ENCODE measurements at regions of chr1 and their contacts with region 1.

Region 1: DNA sequence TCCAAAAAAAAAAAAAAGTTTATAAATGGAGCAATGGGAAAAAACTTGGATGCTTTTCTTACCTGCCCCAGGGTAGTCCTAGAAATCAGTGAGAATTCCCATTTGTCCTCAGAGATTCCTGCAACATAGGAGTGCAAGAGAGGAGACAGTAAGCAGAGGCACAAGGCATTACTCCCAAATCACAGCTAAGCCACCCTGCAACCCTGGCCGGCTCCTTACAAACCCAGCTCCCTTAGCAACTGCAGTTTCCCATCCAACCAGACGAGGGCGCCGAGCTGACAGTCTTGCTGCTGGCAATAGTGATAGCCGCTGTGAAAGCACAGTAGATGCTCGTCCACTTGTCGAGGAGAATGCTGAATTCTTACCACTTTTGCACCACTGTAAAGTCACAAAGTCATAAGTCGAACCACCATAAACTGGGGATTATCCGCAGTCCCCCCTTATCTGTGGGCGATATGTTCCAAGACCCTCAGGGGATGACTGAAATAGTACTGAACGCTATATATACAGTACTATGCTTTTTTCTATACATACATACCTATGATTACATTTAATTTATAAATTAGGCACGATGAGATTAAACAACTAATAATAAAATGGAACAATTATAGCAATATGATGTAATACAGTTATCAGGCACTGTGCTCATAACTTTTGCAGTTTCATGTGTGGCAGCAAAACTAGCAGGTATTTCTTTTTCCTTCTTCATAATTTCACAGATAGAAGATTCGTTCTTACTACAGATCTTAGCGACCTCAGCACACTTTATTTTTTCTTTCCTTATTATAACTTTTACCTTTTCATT is 6.0 kb upstream of the PITHD1 start:
- DNase-seq: peak; percentile 60 to 81
- H3K4me3 ChIP-seq: no peak overlapping the region
- H3K27ac ChIP-seq: no peak overlapping the region
- H3K4me1 ChIP-seq: peaks cover 11% of the 10 kb centered on the region; the same call in 1 of the 2 replicates
- H3K27me3 ChIP-seq: no peaks in the 10 kb centered on the region
- CTCF ChIP-seq: peak; percentile 82

Region 2: GRCh38 chr1:23627069-23627735 is 145.0 kb before region 1 on chr1:
- CTCF ChIA-PET with region 1: no interaction called
- POLR2A ChIA-PET with region 1: no interaction called
- intact Hi-C with region 1: no loop called
- DNase-seq: peak; percentile 26 to 48
- H3K4me3 ChIP-seq: peak overlapping the region; percentile 20; the same call in 1 of the 2 replicates
- H3K27ac ChIP-seq: no peak overlapping the region
- H3K4me1 ChIP-seq: no peaks in the 10 kb centered on the region; the same call in 1 of the 2 replicates
- H3K27me3 ChIP-seq: no peaks in the 10 kb centered on the region
- CTCF ChIP-seq: no peak

Region 3: DNA sequence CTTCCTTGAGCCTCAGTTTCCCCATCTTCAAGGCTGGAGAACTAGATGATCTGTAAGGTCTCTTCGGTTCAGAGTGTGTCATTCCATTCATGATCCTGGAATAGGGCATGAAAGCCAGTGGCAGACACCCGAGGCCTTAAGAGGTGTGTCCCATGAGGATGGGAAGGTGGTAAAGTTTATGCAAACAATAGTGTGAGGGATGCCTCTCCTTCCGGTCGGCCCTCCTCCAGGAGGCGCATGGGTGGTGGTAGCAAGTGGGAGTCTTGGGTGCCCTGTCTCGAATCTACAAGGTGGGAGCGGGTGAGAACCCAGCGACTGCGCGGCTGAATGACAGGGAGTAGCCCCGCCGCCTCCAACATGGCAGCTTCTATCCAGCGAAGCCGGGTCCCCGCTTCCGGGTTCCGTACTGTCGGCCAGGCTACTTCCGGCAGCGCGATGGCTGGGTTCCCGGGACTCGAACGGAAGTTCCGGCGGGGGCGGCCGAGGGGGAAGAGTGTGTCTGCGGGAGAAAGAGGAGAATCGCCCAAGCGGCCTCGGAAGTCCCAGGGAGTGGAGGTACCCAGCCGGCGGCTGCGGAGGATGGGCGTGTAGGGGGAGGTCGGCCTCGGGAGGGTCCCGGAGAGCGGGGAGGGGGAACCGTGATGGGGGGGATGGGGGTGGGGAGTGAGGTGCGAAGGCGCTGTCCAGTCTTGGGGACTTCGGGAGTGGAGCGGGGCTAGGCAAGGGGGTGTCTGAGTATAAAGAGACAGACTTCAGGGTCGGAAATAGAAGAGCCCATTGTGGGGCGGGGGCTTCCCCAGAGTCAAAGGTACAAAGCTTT is 18.7 kb after region 1 on chr1 and contains the start of gene LYPLA2:
- CTCF ChIA-PET with region 1: interaction called, 11 read pairs
- POLR2A ChIA-PET with region 1: interaction called, 3 read pairs
- intact Hi-C with region 1: no loop called
- DNase-seq: peak; percentile 65 to 90
- H3K4me3 ChIP-seq: peak within 1 kb of the TSS; percentile 88
- H3K27ac ChIP-seq: peak within 1 kb of the TSS; percentile 80
- H3K4me1 ChIP-seq: peaks cover 15% of the 10 kb centered on the region
- H3K27me3 ChIP-seq: no peaks in the 10 kb centered on the region
- CTCF ChIP-seq: no peak
- total RNA-seq, gene LYPLA2: 90.1 and 94.9 TPM in 2 replicates

Region 4: DNA sequence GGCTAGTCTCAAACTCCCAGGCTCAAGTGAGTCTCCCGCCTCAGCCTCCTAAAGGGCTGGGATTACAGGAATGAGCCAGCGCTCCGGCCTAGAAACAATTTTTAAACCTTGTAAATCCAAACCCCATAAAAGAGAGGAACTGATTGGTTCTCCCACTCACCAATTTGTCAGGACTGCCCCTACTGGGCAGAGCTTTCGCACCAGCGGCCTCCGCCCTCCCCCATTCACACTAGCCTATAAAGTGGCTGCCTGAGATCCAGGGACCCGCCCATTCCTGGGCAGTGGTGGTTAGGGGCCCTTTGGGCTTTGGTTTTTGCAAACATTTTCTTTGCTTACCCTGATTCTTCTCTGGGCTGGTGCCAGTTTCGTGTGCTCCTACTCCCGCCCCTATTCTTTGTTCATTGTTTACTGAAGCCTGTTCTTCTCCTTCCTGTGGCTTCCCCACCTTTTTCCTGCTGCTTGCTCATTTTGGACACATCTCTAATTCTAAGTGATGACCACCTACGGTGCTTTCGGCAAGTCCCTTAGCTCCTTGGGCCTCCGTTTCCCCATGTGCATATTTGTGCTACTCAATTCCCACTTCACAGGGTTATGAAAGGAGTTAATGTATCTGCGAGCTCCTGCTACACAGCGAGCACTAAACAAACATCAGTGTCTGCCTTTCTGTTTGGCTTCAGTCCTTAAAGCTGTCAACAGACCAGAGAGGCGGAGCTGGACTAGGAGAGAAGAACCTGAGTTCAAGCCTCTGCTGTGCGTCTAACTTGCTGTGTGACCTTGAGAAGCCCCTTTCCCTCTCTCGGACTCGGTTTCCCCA is 933.2 kb after region 1 on chr1:
- CTCF ChIA-PET with region 1: no interaction called
- POLR2A ChIA-PET with region 1: no interaction called
- intact Hi-C with region 1: no loop called
- DNase-seq: peak; percentile 85 to 93
- H3K4me3 ChIP-seq: peak overlapping the region; percentile 34; the same call in 1 of the 2 replicates
- H3K27ac ChIP-seq: peak overlapping the region; percentile 36
- H3K4me1 ChIP-seq: peaks cover 9% of the 10 kb centered on the region
- H3K27me3 ChIP-seq: no peaks in the 10 kb centered on the region
- CTCF ChIP-seq: no peak

Measured in PC-9 (cell line).